Activated CD4-positive, alpha-beta memory T cell treated with anti-CD3 and anti-CD28 coated beads for 36 hours (primary cell): ENCODE measurements at regions of chr2 and their contacts with region 1.

Region 1: DNA sequence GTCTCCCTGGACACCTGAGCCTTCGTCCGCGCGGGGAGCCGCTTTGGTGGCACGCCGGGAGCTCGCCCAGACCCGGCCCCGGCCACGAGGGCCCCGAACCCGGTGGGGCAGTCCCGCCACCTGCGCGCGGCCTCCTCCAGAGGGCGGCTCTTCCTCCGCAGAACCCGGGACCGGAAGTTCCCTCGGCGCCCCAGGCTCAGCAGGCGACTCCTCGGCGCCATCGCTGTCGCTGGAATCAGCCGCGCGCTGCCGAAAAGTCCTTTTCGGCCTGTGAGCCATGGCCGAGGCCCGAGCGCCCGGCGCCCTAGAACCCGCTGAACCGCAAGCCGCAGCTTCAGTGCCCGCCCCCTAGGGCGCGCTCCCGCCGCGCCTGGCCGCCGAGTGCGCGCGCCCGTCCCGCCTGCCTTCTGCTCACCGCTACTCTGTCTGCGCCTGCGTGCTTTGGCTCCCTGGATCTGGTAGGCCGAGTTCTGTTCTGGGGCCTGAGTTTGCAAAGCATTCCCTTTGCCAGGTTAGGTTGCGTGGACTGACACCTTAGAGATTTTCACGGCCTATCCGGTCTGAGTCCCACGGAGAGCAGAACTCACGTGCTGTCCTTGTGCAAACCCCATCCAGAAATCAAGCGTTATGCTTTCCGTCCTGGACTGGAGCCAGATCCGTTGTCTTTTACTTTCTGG is at the start of gene GCFC2:
- DNase-seq: peak; percentile 89
- H3K4me3 Mint-ChIP-seq: peak within 1 kb of the TSS; percentile 91
- H3K27ac Mint-ChIP-seq: peak within 1 kb of the TSS; percentile 95
- H3K4me1 Mint-ChIP-seq: peaks cover 30% of the 10 kb centered on the region
- H3K27me3 Mint-ChIP-seq: peaks cover 2% of the 10 kb centered on the region
- total RNA-seq, gene GCFC2: 29.2 to 30.7 TPM

Region 2: DNA sequence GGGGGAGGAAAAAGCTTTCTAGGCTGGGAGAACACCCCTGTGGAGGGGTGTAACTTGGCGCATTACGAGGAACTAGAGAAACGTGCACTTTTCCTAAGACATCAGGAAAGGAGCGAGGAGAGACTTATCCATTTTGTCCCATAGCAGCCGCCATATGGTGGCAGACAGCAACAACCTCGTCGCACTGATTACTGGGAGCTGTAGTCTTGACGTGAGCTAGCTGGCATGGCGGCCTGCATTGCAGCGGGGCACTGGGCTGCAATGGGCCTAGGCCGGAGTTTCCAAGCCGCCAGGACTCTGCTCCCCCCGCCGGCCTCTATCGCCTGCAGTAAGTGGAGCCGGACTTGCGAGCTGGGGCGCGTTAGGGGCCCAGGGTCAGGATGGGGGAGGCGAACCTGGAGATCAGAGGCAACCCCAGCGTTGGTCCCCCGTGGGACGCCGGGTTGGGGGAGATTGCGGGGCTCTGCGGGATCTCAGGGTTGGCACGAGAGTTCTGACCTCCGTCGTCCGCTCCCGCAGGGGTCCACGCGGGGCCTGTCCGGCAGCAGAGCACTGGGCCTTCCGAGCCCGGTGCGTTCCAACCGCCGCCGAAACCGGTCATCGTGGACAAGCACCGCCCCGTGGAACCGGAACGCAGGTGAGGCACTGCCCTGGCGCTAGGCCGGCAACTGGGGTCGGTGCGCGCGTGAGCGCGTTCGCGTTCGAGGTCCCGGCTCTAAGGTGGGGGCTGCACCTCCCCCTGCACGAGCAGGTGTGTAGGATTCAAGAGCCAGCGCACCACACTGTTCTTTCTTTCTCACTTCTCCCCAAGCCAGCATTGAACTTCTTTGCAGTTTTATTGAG is 63.9 kb before region 1 on chr2 and contains the start of gene MRPL19:
- CTCF ChIA-PET with region 1: interaction called, 6 read pairs
- POLR2A ChIA-PET with region 1: interaction called, 11 read pairs
- intact Hi-C with region 1: loop called (anchors 1 kb)
- DNase-seq: peak; percentile 83
- H3K4me3 Mint-ChIP-seq: peak within 1 kb of the TSS; percentile 90
- H3K27ac Mint-ChIP-seq: peak within 1 kb of the TSS; percentile 84
- H3K4me1 Mint-ChIP-seq: peaks cover 30% of the 10 kb centered on the region
- H3K27me3 Mint-ChIP-seq: no peaks in the 10 kb centered on the region
- total RNA-seq, gene MRPL19: 61.2 to 64.6 TPM

Region 3: DNA sequence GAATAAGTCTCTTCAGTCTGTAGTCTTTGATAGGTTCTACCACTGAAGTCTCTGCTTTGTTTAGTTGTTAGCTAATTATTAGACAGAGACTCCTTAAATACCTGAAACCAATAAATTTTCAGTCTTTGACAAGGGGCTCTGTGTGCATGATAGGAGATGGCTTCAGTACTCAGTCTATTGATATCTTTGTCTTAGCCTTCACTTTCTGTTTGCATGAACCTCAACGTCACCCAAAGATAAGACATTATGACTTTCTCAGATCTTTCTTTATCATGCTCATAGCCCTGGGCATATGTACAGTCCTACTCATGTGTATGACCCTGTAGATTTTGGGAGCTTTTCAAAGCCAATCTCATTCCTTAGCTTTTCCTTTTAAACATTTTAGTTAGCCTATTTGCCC is 183.5 kb after region 1 on chr2:
- CTCF ChIA-PET with region 1: no interaction called
- POLR2A ChIA-PET with region 1: no interaction called
- intact Hi-C with region 1: no loop called
- DNase-seq: no peak
- H3K4me3 Mint-ChIP-seq: no peak overlapping the region
- H3K27ac Mint-ChIP-seq: no peak overlapping the region
- H3K4me1 Mint-ChIP-seq: no peaks in the 10 kb centered on the region
- H3K27me3 Mint-ChIP-seq: no peaks in the 10 kb centered on the region